GM12878 (cell line): ENCODE measurements at regions of chr18 and their contacts with region 1.

Region 1: GRCh38 chr18:56563568-56563967 is 74.8 kb downstream of the TXNL1 start:
- DNase-seq: no peak
- ATAC-seq: peak; percentile 92
- H3K4me3 ChIP-seq: no peak overlapping the region
- H3K27ac ChIP-seq: no peak overlapping the region
- H3K4me1 ChIP-seq: no peaks in the 10 kb centered on the region
- H3K27me3 ChIP-seq: no peaks in the 10 kb centered on the region; a peak in 1 of 4 replicates
- CTCF ChIP-seq: peak; percentile 28 to 46 (median 29); a peak in 5 of 6 replicates
- EP300 ChIP-seq: no peak
- POLR2A ChIP-seq: no peak
- RAD21 ChIP-seq: peak; percentile 24; the same call in 1 of the 2 replicates

Region 2: GRCh38 chr18:56224690-56225561 is 338.6 kb before region 1 on chr18:
- CTCF ChIA-PET with region 1: no interaction called
- POLR2A ChIA-PET with region 1: no interaction called
- RAD21 ChIA-PET with region 1: no interaction called
- SMC1A ChIA-PET with region 1: no interaction called
- in situ Hi-C with region 1: no loop called
- intact Hi-C with region 1: no loop called
- DNase-seq: no peak
- ATAC-seq: no peak
- H3K4me3 ChIP-seq: no peak overlapping the region
- H3K27ac ChIP-seq: no peak overlapping the region
- H3K4me1 ChIP-seq: no peaks in the 10 kb centered on the region
- H3K27me3 ChIP-seq: no peaks in the 10 kb centered on the region
- CTCF ChIP-seq: no peak
- EP300 ChIP-seq: no peak
- POLR2A ChIP-seq: no peak
- RAD21 ChIP-seq: no peak

Region 3: DNA sequence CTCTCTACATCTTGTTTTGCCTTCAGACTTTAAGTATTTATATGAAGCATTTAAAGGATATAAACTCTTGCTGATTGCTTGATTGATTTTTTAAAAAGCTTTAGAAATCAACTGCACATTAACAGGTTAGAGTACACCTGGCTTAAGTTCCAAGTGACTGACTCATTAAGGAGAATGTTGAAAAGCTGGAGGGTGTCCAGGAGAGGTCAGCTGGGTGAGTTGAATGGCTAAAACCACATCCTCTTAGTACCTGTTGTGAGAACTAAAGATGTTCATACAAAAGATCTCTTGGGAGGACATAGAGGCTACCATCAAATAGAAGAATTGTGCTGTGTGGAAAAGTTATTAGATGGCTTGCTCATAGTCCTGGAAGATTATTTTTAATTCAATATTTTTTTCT is 132.0 kb before region 1 on chr18:
- CTCF ChIA-PET with region 1: interaction called, 3 read pairs
- POLR2A ChIA-PET with region 1: no interaction called
- RAD21 ChIA-PET with region 1: no interaction called
- SMC1A ChIA-PET with region 1: no interaction called
- in situ Hi-C with region 1: no loop called
- intact Hi-C with region 1: loop called (anchors 5 kb)
- DNase-seq: no peak
- ATAC-seq: no peak
- H3K4me3 ChIP-seq: no peak overlapping the region
- H3K27ac ChIP-seq: no peak overlapping the region
- H3K4me1 ChIP-seq: no peaks in the 10 kb centered on the region
- H3K27me3 ChIP-seq: no peaks in the 10 kb centered on the region
- CTCF ChIP-seq: no peak
- EP300 ChIP-seq: no peak
- POLR2A ChIP-seq: no peak
- RAD21 ChIP-seq: no peak

Region 4: DNA sequence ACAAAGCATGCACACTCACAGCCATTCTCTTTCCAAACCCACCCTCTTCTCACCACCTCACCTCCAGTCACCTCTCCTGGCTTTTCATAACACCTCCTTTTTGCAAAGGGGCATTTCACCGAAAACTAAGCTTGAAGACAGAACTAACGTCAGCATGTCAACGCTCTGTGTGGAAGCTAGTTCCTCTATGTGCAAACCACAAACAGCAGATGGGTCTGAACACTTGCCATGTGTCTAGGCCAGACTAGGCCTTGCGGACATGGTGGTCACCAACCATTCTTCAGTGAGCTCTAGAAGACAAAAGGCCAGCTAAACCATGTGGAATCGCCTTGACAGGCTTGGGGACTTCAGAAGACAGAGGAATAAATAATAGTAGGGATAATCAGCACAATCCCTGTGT is 73.7 kb before region 1 on chr18:
- CTCF ChIA-PET with region 1: interaction called, 4 read pairs
- POLR2A ChIA-PET with region 1: no interaction called
- RAD21 ChIA-PET with region 1: no interaction called
- SMC1A ChIA-PET with region 1: interaction called, 3 read pairs
- in situ Hi-C with region 1: loop called (anchors 10 kb)
- intact Hi-C with region 1: loop called (anchors 10 kb)
- DNase-seq: no peak
- ATAC-seq: no peak
- H3K4me3 ChIP-seq: no peak overlapping the region
- H3K27ac ChIP-seq: no peak overlapping the region
- H3K4me1 ChIP-seq: no peaks in the 10 kb centered on the region
- H3K27me3 ChIP-seq: peaks cover 0 to 2% of the 10 kb centered on the region in 2 experiments; a peak in 1 of 4 replicates
- CTCF ChIP-seq: no peak
- EP300 ChIP-seq: no peak
- POLR2A ChIP-seq: no peak
- RAD21 ChIP-seq: no peak

Region 5: DNA sequence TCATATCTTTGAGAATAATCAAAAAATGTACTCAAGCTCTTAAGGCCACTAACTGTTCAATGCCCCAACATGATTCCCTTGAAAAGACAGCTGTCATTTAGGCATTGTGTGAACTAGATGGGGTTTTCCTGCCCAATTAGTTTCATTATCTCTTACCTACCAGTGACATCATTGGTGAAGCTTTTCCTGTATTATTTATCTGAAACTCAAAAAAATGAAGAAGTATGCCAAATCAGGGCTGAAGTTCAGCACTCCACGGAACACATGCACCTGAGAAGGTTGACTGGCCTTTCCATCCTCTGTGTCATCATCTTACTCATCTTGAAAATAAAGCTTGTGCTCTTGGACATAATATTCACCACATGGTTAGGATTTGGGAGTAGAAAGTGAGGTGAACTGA is 51.6 kb before region 1 on chr18:
- CTCF ChIA-PET with region 1: no interaction called
- POLR2A ChIA-PET with region 1: interaction called, 3 read pairs
- RAD21 ChIA-PET with region 1: interaction called, 4 read pairs
- SMC1A ChIA-PET with region 1: interaction called, 12 read pairs
- in situ Hi-C with region 1: no loop called
- intact Hi-C with region 1: no loop called
- DNase-seq: peak; percentile 20
- ATAC-seq: peak; percentile 88
- H3K4me3 ChIP-seq: no peak overlapping the region
- H3K27ac ChIP-seq: no peak overlapping the region
- H3K4me1 ChIP-seq: no peaks in the 10 kb centered on the region
- H3K27me3 ChIP-seq: no peaks in the 10 kb centered on the region; a peak in 1 of 4 replicates
- CTCF ChIP-seq: no peak
- EP300 ChIP-seq: no peak
- POLR2A ChIP-seq: no peak
- RAD21 ChIP-seq: no peak

Region 6: DNA sequence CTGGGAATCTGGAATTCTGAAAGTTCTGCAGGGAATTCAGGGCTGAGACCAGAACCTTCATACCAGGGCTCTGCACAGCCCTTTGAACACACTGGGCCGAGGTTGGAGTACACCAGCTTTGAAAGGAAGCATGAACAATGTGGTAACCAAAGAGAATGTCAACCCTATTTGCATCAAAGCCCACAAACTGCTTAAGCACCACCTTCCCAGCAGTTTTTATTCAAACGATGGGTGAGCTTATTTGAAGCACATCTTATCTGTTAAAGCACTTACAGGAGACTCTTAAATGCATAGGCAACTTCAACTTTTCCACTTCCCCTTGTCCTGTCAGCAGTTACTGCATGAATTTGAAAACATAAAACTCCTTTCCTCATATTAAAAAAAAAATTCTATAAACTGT is 21.8 kb before region 1 on chr18:
- CTCF ChIA-PET with region 1: interaction called, 5 read pairs
- POLR2A ChIA-PET with region 1: no interaction called
- RAD21 ChIA-PET with region 1: no interaction called
- SMC1A ChIA-PET with region 1: interaction called, 12 read pairs
- in situ Hi-C with region 1: no loop called
- intact Hi-C with region 1: no loop called
- DNase-seq: no peak
- ATAC-seq: peak; percentile 84
- H3K4me3 ChIP-seq: no peak overlapping the region
- H3K27ac ChIP-seq: no peak overlapping the region
- H3K4me1 ChIP-seq: no peaks in the 10 kb centered on the region
- H3K27me3 ChIP-seq: no peaks in the 10 kb centered on the region
- CTCF ChIP-seq: no peak
- EP300 ChIP-seq: no peak
- POLR2A ChIP-seq: no peak
- RAD21 ChIP-seq: no peak

Region 7: GRCh38 chr18:56637711-56638270 is 74.2 kb after region 1 on chr18:
- CTCF ChIA-PET with region 1: no interaction called
- POLR2A ChIA-PET with region 1: no interaction called
- RAD21 ChIA-PET with region 1: no interaction called
- SMC1A ChIA-PET with region 1: no interaction called
- in situ Hi-C with region 1: no loop called
- intact Hi-C with region 1: no loop called
- DNase-seq: no peak
- ATAC-seq: peak; percentile 49
- H3K4me3 ChIP-seq: peak overlapping the region; percentile 87
- H3K27ac ChIP-seq: peak overlapping the region; percentile 90
- H3K4me1 ChIP-seq: peaks cover 5% of the 10 kb centered on the region
- H3K27me3 ChIP-seq: no peaks in the 10 kb centered on the region
- CTCF ChIP-seq: no peak
- EP300 ChIP-seq: no peak
- POLR2A ChIP-seq: no peak
- RAD21 ChIP-seq: no peak